Spleen (tissue), 13 donors: ENCODE measurements at regions of chr2 and their contacts with region 1.

Region 1: DNA sequence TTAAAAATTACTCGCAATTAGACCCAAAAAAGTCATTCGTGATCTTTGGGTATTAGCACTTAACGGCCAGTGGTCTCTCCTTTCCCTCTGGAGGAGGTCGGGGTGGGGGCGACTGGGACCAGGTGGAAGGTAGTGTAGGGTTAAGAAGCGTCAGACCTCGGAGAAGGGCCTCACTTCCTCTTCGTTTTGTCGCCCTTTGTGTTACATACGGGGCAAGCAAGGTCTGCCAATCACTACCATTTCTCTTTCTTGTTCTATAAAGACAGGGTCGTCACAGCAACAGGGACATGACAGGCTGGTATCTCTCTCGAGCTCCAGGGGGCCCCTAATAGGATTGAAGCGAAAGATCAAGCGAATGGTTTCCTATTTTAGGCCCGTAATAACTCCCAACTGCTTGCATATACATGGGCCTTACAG is 136.6 kb downstream of the INSIG2 start:
- DNase-seq: no peak
- H3K4me3 ChIP-seq: peak overlapping the region in 7 of 8 donors; percentile 43 to 69 (median 45)
- H3K27ac ChIP-seq: peak overlapping the region in 4 of 8 donors; percentile 34 to 63 (median 47)
- H3K4me1 ChIP-seq: peaks cover 6 to 36% (median 21%) of the 10 kb centered on the region in 6 donors
- H3K27me3 ChIP-seq: peaks cover 0 to 84% (median 71%) of the 10 kb centered on the region in 7 donors
- CTCF ChIP-seq: no peak
- POLR2A ChIP-seq: no peak

Region 2: DNA sequence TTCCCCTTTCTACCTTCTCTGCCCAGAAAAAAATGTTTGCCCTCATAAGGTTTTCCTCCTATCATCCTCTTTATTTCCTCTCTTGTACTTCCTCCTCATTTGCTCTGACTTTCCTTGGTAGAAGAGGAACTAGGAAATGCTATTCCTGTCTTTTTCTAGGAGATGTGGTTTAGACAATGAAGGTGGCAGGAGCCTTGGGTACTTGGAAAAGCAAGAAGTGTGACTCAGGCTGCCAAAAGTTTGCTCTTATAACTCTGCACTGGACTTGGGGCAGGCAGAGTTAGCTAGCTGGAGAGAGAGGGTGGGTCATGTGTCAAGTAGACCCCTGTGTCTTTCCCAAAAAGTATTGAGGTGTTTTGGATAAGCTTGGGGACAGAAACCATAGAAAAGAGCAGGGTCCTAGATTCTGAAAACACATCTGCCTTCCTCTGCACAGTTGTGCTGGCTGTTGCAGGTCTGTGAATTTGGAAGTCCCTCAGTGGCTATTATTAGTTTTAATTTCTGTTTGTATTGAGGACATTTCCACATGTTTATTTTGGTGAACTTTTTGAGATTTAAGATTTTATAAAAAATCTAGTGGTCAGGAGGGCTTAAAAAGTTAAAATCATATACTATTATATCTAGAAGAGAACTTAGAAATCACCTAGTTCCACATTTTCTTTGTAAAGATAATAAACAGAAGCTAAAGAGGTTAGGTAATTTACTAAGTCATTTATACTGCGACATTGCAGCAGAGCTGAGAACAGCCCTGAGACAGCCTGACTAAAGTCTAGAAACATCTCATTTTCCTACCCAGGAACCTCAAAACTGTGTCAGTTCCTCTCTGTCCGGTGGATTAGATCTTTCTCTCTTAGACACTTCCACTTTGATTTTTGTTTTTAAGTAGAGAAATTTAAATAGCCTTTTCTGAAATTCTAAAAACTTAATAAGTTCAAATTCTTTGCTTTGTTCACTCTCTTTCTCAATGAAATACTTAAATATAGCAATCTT is 120.7 kb before region 1 on chr2:
- intact Hi-C with region 1: no loop called
- DNase-seq: no peak
- H3K4me3 ChIP-seq: no peak overlapping the region
- H3K27ac ChIP-seq: peak overlapping the region in 5 of 8 donors; percentile 0 to 43 (median 39)
- H3K4me1 ChIP-seq: peaks cover 0 to 50% (median 5%) of the 10 kb centered on the region in 6 donors
- H3K27me3 ChIP-seq: no peaks in the 10 kb centered on the region
- CTCF ChIP-seq: no peak
- POLR2A ChIP-seq: no peak

Region 3: DNA sequence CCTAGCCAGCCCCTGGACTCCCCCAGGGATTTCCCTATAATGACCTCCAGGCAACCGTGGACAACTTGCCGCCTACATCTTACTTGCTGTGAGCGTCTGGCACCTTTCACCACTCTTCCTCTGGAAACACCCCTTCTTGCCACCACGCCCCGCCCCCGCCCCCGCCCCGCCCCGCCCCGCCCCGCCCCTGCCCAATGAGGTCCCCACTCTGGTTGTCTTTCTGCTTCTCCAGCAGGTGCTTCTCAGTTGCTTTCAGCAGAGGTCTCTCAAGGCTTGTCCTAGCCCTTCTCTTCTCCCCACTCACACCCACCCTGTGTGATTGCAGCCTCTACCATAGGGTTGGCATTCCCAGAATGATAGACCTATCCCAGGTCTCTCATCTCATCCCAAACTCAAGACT is 408.0 kb after region 1 on chr2:
- intact Hi-C with region 1: no loop called
- DNase-seq: no peak
- H3K4me3 ChIP-seq: no peak overlapping the region
- H3K27ac ChIP-seq: no peak overlapping the region
- H3K4me1 ChIP-seq: no peaks in the 10 kb centered on the region
- H3K27me3 ChIP-seq: no peaks in the 10 kb centered on the region
- CTCF ChIP-seq: no peak
- POLR2A ChIP-seq: no peak

Region 4: DNA sequence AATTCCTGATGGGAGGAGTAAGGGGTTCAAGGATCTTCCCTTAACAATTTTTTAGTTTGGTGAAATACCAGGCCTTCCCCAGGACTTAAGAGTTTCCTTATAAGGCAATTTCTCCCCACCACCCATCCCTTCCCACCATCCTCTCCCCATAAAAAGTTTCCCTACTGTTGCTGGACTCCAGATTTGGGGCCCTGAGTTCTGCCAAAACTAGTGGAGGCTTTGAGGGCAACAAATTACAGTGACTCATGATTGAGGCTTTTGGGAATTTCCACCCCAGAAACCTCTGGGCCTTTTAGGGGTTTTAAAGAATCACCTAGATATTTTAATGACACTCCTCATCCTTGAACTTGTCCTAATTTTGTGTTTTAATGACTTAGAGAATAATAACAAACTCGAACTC is 636.8 kb after region 1 on chr2:
- intact Hi-C with region 1: loop called (anchors 5 kb)
- DNase-seq: no peak
- H3K4me3 ChIP-seq: no peak overlapping the region
- H3K27ac ChIP-seq: no peak overlapping the region
- H3K4me1 ChIP-seq: peaks cover 3 to 20% (median 13%) of the 10 kb centered on the region in 6 donors
- H3K27me3 ChIP-seq: peaks cover 4 to 94% (median 50%) of the 10 kb centered on the region in 7 donors
- CTCF ChIP-seq: no peak
- POLR2A ChIP-seq: no peak